ENCODE measurements at regions of chr15 and their contacts with region 1.

Region 1: GRCh38 chr15:61051569-61052031 is 177.5 kb downstream of the RORA start:
- DNase-seq: peak; percentile 54
- H3K4me3 ChIP-seq: no peak overlapping the region
- H3K27me3 ChIP-seq: no peaks in the 10 kb centered on the region; the same call in 1 of the 2 replicates
- CTCF ChIP-seq: peak; percentile 85

Region 2: GRCh38 chr15:60585743-60586708 is 465.6 kb before region 1 on chr15:
- CTCF ChIA-PET with region 1: interaction called, 38 read pairs
- POLR2A ChIA-PET with region 1: no interaction called
- DNase-seq: no peak
- H3K4me3 ChIP-seq: no peak overlapping the region
- H3K27me3 ChIP-seq: 0 out of 2 replicates have a peak, but pooled peaks cover 1% of the 10 kb centered on the region
- CTCF ChIP-seq: peak; percentile 79

Region 3: GRCh38 chr15:61195116-61196002 is 143.8 kb after region 1 on chr15:
- CTCF ChIA-PET with region 1: no interaction called
- POLR2A ChIA-PET with region 1: no interaction called
- DNase-seq: no peak
- H3K4me3 ChIP-seq: no peak overlapping the region
- H3K27me3 ChIP-seq: no peaks in the 10 kb centered on the region
- CTCF ChIP-seq: peak; percentile 77

Measured in BJ (cell line).